Caco-2 (cell line): ENCODE measurements at regions of chr6 and their contacts with region 1.

Region 1: DNA sequence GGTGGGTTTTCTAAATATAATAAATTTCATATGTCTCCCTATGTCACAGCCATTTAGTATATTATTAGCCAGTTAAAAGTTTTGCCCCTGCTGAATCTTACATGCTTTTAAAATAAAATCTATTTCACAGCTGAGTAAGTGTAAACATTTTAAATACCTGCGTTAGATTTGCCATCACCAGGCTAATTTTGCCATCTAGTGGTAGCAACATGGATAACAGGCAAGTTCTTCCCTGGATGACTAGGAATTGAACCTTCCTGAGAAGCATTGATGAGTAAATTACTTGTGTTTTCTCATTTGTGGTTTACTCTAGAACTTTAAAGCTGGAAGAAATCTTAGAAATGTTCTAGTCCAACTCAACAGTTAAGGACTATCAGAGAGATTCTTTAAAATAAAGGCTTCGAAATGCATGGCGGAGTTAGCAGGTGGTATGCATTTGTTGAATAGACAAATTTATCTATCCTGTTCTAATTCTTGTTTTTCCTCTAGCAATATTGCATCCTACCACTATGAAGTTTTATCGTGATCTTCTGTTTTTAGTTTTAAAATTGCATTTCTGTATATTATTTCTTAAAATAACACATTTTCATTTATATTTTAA is 2.6 kb downstream of the PRSS35 start:
- DNase-seq: peak; percentile 46 to 67
- H3K4me3 ChIP-seq: no peak overlapping the region
- H3K4me3 Mint-ChIP-seq: peak overlapping the region; percentile 84
- H3K27ac Mint-ChIP-seq: no peak overlapping the region
- H3K4me1 ChIP-seq: peaks cover 19% of the 10 kb centered on the region
- H3K4me1 Mint-ChIP-seq: peaks cover 25% of the 10 kb centered on the region
- H3K27me3 ChIP-seq: no peaks in the 10 kb centered on the region
- H3K27me3 Mint-ChIP-seq: no peaks in the 10 kb centered on the region
- CTCF ChIP-seq: peak; percentile 76 to 86

Region 2: DNA sequence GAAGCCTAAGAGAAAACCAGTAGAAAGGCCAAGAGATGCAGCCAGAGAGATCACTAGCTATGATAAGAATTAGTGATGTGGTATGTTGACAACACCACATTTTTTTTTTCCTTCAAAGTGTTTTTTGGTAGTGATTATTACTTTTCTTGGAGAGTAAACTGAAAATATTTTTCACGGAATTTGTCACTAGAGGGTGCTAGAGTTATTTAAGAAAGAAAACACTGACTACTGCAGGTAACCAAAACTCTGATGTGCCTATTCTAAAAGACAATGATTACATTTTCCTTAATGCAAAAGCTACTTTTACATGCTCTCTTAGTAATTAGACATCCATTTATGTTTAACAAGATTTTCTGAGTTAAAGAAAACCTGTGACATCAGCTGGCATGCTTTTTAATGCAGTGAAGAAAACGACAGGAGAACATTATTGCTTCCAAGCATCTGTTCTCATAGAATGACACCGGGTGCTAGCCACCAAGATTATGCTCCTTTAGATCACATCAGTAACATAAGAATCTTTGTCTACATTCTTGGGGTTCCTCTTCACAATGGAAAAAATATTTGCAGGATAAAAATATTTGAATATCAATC is 293.0 kb before region 1 on chr6:
- CTCF ChIA-PET with region 1: interaction called, 5 read pairs
- POLR2A ChIA-PET with region 1: interaction called, 3 read pairs
- intact Hi-C with region 1: loop called (anchors 1 kb)
- DNase-seq: no peak
- H3K4me3 ChIP-seq: no peak overlapping the region
- H3K4me3 Mint-ChIP-seq: peak overlapping the region; percentile 3
- H3K27ac Mint-ChIP-seq: peak overlapping the region; percentile 5
- H3K4me1 ChIP-seq: peaks cover 32% of the 10 kb centered on the region
- H3K4me1 Mint-ChIP-seq: peaks cover 15% of the 10 kb centered on the region
- H3K27me3 ChIP-seq: no peaks in the 10 kb centered on the region
- H3K27me3 Mint-ChIP-seq: no peaks in the 10 kb centered on the region
- CTCF ChIP-seq: peak in 1 of 2 experiments; percentile 28

Region 3: DNA sequence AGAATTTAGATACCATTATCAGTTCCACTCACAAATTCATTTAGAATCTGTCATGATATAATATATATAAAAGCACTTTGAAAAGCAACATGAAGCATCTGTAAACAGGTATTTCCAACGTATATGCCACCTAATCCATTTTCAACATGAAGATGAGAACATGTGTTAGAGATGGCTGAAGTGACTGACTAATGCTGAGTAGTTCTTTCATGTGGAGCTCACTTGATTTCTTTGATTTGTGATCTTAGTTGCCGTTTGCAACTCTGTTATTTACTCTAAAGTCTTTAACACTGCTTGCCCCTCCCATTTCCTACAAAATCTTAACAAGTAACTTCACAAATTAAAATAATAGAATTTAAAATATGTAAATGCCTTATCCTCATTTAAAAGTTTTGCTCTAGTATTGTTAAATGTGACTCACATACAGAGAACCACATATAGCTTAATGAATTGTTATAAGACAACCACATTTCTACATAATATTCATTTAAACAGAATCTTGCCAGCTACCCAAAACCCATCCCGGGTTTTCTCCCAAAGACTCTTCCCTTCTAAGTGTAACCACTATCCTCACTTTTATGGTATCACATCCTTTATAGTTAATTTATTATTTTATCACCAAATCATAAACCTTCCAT is 162.4 kb before region 1 on chr6:
- CTCF ChIA-PET with region 1: no interaction called
- POLR2A ChIA-PET with region 1: no interaction called
- intact Hi-C with region 1: loop called (anchors 5 kb)
- DNase-seq: no peak
- H3K4me3 ChIP-seq: no peak overlapping the region
- H3K4me3 Mint-ChIP-seq: no peak overlapping the region
- H3K27ac Mint-ChIP-seq: no peak overlapping the region
- H3K4me1 ChIP-seq: peaks cover 5% of the 10 kb centered on the region; the same call in 1 of the 2 replicates
- H3K4me1 Mint-ChIP-seq: peaks cover 24% of the 10 kb centered on the region
- H3K27me3 ChIP-seq: no peaks in the 10 kb centered on the region
- H3K27me3 Mint-ChIP-seq: no peaks in the 10 kb centered on the region
- CTCF ChIP-seq: no peak

Region 4: GRCh38 chr6:83424392-83425018 is 90.5 kb before region 1 on chr6:
- CTCF ChIA-PET with region 1: interaction called, 61 read pairs
- POLR2A ChIA-PET with region 1: interaction called, 6 read pairs
- intact Hi-C with region 1: no loop called
- DNase-seq: no peak
- H3K4me3 ChIP-seq: no peak overlapping the region
- H3K4me3 Mint-ChIP-seq: no peak overlapping the region
- H3K27ac Mint-ChIP-seq: no peak overlapping the region
- H3K4me1 ChIP-seq: peaks cover 35% of the 10 kb centered on the region
- H3K4me1 Mint-ChIP-seq: peaks cover 43% of the 10 kb centered on the region
- H3K27me3 ChIP-seq: no peaks in the 10 kb centered on the region
- H3K27me3 Mint-ChIP-seq: no peaks in the 10 kb centered on the region
- CTCF ChIP-seq: no peak

Region 5: DNA sequence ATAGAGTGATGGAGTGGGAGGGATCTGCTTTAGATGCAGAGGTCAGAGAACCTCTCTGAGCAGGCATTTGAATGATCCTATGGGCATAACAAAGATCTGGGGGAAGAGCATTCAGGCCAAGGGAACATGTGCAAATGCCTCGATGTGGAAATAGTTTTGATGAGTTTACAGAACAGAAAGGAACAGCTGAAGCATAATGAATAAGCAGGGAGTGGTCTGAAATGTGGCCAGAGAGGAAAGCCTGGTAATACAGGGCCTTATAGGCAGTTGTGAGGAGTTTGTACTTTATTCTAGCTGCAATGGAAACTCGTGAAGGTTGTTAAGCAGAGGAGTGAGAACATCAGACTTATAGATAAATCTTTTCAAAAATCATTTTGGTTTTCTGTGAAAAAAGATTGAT is 51.1 kb before region 1 on chr6:
- CTCF ChIA-PET with region 1: interaction called, 24 read pairs
- POLR2A ChIA-PET with region 1: interaction called, 10 read pairs
- intact Hi-C with region 1: loop called (anchors 1 kb)
- DNase-seq: peak in 1 of 2 experiments; percentile 16
- H3K4me3 ChIP-seq: no peak overlapping the region
- H3K4me3 Mint-ChIP-seq: peak overlapping the region; percentile 20
- H3K27ac Mint-ChIP-seq: peak overlapping the region; percentile 89
- H3K4me1 ChIP-seq: peaks cover 53% of the 10 kb centered on the region
- H3K4me1 Mint-ChIP-seq: peaks cover 48% of the 10 kb centered on the region
- H3K27me3 ChIP-seq: no peaks in the 10 kb centered on the region
- H3K27me3 Mint-ChIP-seq: no peaks in the 10 kb centered on the region
- CTCF ChIP-seq: no peak